Naive thymus-derived CD4-positive, alpha-beta T cell (primary cell): ENCODE measurements at regions of chr4 and their contacts with region 1.

Region 1: DNA sequence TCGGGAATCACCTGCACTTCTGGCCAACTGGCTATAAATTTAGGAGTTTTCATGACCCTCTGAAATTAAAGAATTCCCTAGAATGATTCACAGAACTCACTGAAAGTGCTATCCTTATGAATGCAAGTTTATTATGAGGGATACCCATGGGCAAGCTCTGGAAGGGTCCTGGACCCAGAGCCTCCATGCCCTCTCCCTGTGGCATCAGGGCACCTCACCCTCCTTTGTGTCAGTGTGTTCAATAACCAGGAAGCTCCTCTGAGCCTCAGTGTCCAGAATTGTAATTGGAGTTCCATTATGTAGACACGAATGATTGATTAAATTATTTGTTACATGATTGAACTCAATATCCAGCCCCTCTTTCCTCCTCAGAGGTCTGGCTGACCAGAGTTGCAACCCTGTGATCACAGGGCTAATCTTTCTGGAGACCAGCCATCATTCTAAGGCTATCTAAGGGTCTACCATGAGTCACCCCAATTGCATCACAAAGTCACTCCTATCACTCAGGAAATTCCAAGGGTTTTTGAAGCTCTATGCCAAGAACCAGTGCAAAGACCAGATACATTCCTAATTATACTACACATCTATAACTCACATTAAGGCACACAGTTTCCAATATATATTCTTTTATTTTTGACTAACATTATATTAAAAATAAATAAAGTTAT is 8.9 kb downstream of the ANXA3 start:
- DNase-seq: no peak
- ATAC-seq: no peak
- H3K4me3 ChIP-seq: no peak overlapping the region
- H3K4me3 Mint-ChIP-seq: no peak overlapping the region
- H3K27ac ChIP-seq: no peak overlapping the region
- H3K27ac Mint-ChIP-seq: no peak overlapping the region
- H3K4me1 ChIP-seq: no peaks in the 10 kb centered on the region
- H3K4me1 Mint-ChIP-seq: peaks cover 0 to 2% (median 0%) of the 10 kb centered on the region in 7 donors
- H3K27me3 ChIP-seq: no peaks in the 10 kb centered on the region
- H3K27me3 Mint-ChIP-seq: peaks cover 10 to 25% (median 12%) of the 10 kb centered on the region in 5 donors

Region 2: DNA sequence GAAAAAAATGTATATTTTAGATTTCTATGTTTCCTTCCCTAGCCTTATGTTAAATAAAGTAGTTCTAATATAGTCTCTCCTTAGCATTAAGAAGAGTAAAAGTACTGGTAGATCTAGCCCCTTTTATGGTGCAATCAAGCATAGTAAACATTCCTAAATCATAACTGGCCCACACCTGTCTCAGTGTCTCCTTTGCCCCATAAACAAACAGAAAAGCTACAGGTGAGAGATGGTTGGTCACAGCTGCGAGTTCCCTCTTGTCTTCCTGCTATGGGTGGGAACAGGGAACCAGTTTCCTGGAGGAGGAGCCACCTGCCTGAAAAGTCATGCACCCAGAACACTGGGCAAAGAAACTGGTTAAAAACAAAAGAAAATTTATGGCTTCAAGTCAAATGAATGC is 1679.1 kb before region 1 on chr4:
- CTCF ChIA-PET with region 1: no interaction called
- POLR2A ChIA-PET with region 1: no interaction called
- intact Hi-C with region 1: no loop called
- DNase-seq: no peak
- ATAC-seq: no peak
- H3K4me3 ChIP-seq: no peak overlapping the region
- H3K4me3 Mint-ChIP-seq: no peak overlapping the region
- H3K27ac ChIP-seq: no peak overlapping the region
- H3K27ac Mint-ChIP-seq: no peak overlapping the region
- H3K4me1 ChIP-seq: no peaks in the 10 kb centered on the region
- H3K4me1 Mint-ChIP-seq: peaks cover 0 to 5% (median 0%) of the 10 kb centered on the region in 7 donors
- H3K27me3 ChIP-seq: peaks cover 0 to 4% of the 10 kb centered on the region in 2 donors
- H3K27me3 Mint-ChIP-seq: peaks cover 0 to 25% (median 17%) of the 10 kb centered on the region in 5 donors

Region 3: DNA sequence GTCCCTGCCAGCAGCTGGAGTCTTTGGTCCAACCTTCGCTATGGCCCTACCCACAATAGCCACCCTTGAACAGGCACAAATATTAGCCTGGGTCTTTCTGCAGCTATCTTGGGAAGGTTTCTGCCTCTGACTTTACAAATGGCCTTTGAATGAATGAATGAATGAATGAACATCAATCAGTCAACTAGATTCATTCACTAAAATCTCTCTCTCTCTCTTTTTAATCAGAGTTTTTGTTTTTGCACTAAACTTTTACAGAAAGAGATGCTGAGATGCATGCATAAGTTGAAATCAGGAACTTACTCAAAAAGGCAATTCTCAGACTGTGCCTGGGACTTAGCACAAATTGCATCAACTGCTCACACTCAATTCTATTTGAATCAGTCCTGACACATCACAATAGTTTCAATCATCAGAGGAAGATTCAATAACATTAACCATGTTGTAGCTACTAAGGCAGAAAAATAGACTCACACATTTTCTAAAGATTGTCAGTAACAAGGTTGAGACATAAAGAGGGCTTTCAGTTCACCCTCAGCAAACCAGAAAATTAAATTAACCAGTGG is 46.2 kb after region 1 on chr4:
- CTCF ChIA-PET with region 1: no interaction called
- POLR2A ChIA-PET with region 1: no interaction called
- intact Hi-C with region 1: loop called in 1 of 2 experiments (anchors 5 kb)
- DNase-seq: no peak
- ATAC-seq: no peak
- H3K4me3 ChIP-seq: no peak overlapping the region
- H3K4me3 Mint-ChIP-seq: no peak overlapping the region
- H3K27ac ChIP-seq: no peak overlapping the region
- H3K27ac Mint-ChIP-seq: no peak overlapping the region
- H3K4me1 ChIP-seq: peaks cover 0 to 18% of the 10 kb centered on the region in 2 donors
- H3K4me1 Mint-ChIP-seq: peaks cover 8 to 30% (median 22%) of the 10 kb centered on the region in 7 donors
- H3K27me3 ChIP-seq: no peaks in the 10 kb centered on the region
- H3K27me3 Mint-ChIP-seq: peaks cover 0 to 16% (median 5%) of the 10 kb centered on the region in 5 donors